Gastrocnemius medialis (tissue), 4 donors: ENCODE measurements at regions of chr1 and their contacts with region 1.

Region 1: DNA sequence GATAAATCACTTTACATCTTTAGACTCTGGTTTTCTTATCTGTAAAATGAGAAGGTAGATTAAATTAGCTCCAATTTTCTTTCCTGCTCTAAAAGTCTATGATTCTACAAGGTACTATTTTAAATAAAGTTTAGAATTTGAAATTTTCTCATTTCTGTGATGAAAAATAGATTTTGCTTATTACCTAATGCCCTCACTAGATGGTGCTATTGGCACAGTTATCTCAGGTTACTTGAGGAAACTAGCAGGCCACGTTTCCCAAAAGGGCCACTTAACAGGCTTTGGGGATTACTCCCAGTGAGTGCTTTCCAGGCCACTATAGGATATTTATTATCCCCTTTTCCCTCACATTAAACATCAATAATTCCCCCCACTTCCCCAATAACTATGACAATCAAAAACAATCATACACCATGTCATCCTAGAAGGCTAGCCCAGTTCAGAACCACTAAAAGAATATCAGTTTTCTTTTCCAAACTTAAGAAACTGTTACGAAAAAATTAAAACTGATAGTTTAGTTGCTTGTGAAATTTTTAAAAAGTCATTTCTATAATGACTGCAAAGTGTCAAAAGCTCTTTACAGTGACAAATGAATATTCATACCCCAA is 30.6 kb downstream of the OMA1 start:
- DNase-seq: peak; percentile 19 to 23
- ATAC-seq: peak; percentile 63 to 89
- H3K4me3 ChIP-seq: no peak overlapping the region
- H3K27ac ChIP-seq: peak overlapping the region in 1 of 4 donors; percentile 38
- H3K4me1 ChIP-seq: no peaks in the 10 kb centered on the region
- H3K27me3 ChIP-seq: no peaks in the 10 kb centered on the region
- CTCF ChIP-seq: peak; percentile 59 to 81 (median 70)
- POLR2A ChIP-seq: no peak

Region 2: GRCh38 chr1:58546520-58547308 is 30.8 kb after region 1 on chr1 and contains the start of gene OMA1:
- in situ Hi-C with region 1: loop called in 2 of 4 experiments (anchors 5 kb)
- intact Hi-C with region 1: loop called (anchors 1 kb)
- DNase-seq: peak; percentile 93 to 97
- ATAC-seq: peak; percentile 95 to 96
- H3K4me3 ChIP-seq: peak within 1 kb of the TSS; percentile 78 to 92 (median 84)
- H3K27ac ChIP-seq: peak within 1 kb of the TSS; percentile 99
- H3K4me1 ChIP-seq: peaks cover 5 to 9% of the 10 kb centered on the region in 2 donors
- H3K27me3 ChIP-seq: no peaks in the 10 kb centered on the region
- CTCF ChIP-seq: peak; percentile 95 to 99 (median 98)
- POLR2A ChIP-seq: peak; percentile 78 to 81
- total RNA-seq, gene OMA1: 11.7 to 23.7 (median 19.3) TPM

Region 3: GRCh38 chr1:58652651-58653184 is 136.8 kb after region 1 on chr1:
- in situ Hi-C with region 1: loop called (anchors 5 to 10 kb)
- intact Hi-C with region 1: loop called (anchors 1 kb)
- DNase-seq: peak; percentile 11 to 43
- ATAC-seq: peak; percentile 78 to 89
- H3K4me3 ChIP-seq: no peak overlapping the region
- H3K27ac ChIP-seq: no peak overlapping the region
- H3K4me1 ChIP-seq: peaks cover 3 to 5% of the 10 kb centered on the region in 2 donors
- H3K27me3 ChIP-seq: no peaks in the 10 kb centered on the region
- CTCF ChIP-seq: peak; percentile 60 to 83 (median 75)
- POLR2A ChIP-seq: no peak

Region 4: DNA sequence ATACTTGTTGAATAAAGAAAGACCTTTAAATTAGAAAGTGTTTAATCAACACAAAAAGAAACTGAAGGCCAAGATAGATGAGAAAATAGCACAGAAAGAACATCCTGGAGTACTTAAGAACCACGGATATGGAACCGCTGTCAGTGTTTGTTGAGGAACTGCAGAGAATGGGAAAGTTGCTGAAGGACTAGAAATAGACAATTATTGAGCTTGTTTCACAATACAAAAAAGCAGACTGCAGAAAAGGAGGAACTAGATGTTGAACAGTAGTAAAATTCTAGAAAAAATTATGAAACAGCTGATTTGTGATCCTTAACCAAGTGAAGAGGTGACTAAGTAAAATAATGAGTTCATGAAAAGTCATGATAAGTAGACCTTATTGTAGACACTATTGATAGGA is 154.3 kb after region 1 on chr1:
- in situ Hi-C with region 1: no loop called
- intact Hi-C with region 1: no loop called
- DNase-seq: no peak
- ATAC-seq: no peak
- H3K4me3 ChIP-seq: no peak overlapping the region
- H3K27ac ChIP-seq: no peak overlapping the region
- H3K4me1 ChIP-seq: no peaks in the 10 kb centered on the region
- H3K27me3 ChIP-seq: no peaks in the 10 kb centered on the region
- CTCF ChIP-seq: no peak
- POLR2A ChIP-seq: no peak

Region 5: DNA sequence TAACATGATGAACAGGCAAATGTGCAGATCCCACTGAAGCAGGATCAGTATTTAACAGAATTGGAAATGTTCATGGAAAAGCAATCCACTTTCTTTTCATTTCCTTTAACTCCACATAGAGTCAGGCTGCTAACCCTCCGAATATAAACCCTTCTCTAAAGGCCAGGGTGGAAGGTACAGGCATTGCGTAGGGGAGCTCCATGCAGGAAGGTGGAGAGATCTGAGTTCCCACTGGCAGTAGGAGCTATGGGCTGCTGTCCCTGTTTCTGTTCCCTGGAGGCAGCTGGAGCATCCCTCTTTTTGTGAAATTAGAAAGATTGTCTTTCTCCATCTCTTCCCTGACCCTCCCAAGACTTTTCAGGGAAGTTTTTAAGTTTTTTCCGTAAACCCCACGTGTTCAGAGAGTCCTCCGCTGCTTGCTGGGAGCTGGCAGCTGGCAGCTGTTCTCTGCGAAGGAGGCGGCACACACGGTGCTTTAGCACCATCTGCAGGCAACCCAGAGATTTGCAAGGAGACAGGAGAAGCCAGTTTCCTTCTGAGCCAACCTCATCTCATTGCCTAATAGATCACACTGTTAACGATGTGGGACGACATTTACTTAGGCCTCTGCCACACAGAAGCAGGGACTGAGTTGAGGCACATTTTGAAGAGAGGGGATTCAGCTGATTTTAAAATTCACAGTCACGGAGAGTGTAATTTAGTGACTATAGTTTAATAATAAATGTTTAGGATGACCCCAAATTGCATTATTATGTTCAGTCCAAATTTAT is 1243.4 kb after region 1 on chr1:
- in situ Hi-C with region 1: loop called in 2 of 4 experiments (anchors 25 kb)
- intact Hi-C with region 1: loop called (anchors 10 kb)
- DNase-seq: peak; percentile 79 to 85
- ATAC-seq: peak; percentile 94 to 98
- H3K4me3 ChIP-seq: peak overlapping the region; percentile 34 to 55 (median 48)
- H3K27ac ChIP-seq: peak overlapping the region; percentile 77 to 84 (median 80)
- H3K4me1 ChIP-seq: peaks cover 16 to 30% of the 10 kb centered on the region in 2 donors
- H3K27me3 ChIP-seq: no peaks in the 10 kb centered on the region
- CTCF ChIP-seq: peak; percentile 95 to 99 (median 98)
- POLR2A ChIP-seq: no peak

Region 6: GRCh38 chr1:59767119-59767518 is 1251.2 kb after region 1 on chr1:
- in situ Hi-C with region 1: loop called in 2 of 4 experiments (anchors 25 kb)
- intact Hi-C with region 1: loop called (anchors 10 kb)
- DNase-seq: no peak
- ATAC-seq: peak in 1 of 2 donors; percentile 31
- H3K4me3 ChIP-seq: no peak overlapping the region
- H3K27ac ChIP-seq: no peak overlapping the region
- H3K4me1 ChIP-seq: peaks cover 0 to 16% of the 10 kb centered on the region in 2 donors
- H3K27me3 ChIP-seq: no peaks in the 10 kb centered on the region
- CTCF ChIP-seq: no peak
- POLR2A ChIP-seq: no peak